ENCODE measurements at regions of chr1 and their contacts with region 1.

Region 1: GRCh38 chr1:31663622-31664452 is 19.2 kb upstream of the PEF1 start:
- DNase-seq: no peak
- H3K4me3 ChIP-seq: no peak overlapping the region
- H3K27ac ChIP-seq: no peak overlapping the region
- H3K4me1 ChIP-seq: peaks cover 13 to 36% (median 25%) of the 10 kb centered on the region in 3 donors
- H3K27me3 ChIP-seq: no peaks in the 10 kb centered on the region
- CTCF ChIP-seq: peak; percentile 91 to 96 (median 95)
- POLR2A ChIP-seq: no peak

Region 2: GRCh38 chr1:31297277-31298247 is 366.3 kb before region 1 on chr1:
- intact Hi-C with region 1: no loop called
- DNase-seq: no peak
- H3K4me3 ChIP-seq: peak overlapping the region; percentile 81 to 98 (median 93)
- H3K27ac ChIP-seq: peak overlapping the region; percentile 94 to 98 (median 96)
- H3K4me1 ChIP-seq: peaks cover 0 to 53% (median 23%) of the 10 kb centered on the region in 3 donors
- H3K27me3 ChIP-seq: no peaks in the 10 kb centered on the region
- CTCF ChIP-seq: no peak
- POLR2A ChIP-seq: no peak

Region 3: GRCh38 chr1:31605908-31606427 is 57.9 kb before region 1 on chr1:
- intact Hi-C with region 1: no loop called
- DNase-seq: no peak
- H3K4me3 ChIP-seq: no peak overlapping the region
- H3K27ac ChIP-seq: no peak overlapping the region
- H3K4me1 ChIP-seq: no peaks in the 10 kb centered on the region
- H3K27me3 ChIP-seq: no peaks in the 10 kb centered on the region
- CTCF ChIP-seq: no peak
- POLR2A ChIP-seq: no peak

Region 4: DNA sequence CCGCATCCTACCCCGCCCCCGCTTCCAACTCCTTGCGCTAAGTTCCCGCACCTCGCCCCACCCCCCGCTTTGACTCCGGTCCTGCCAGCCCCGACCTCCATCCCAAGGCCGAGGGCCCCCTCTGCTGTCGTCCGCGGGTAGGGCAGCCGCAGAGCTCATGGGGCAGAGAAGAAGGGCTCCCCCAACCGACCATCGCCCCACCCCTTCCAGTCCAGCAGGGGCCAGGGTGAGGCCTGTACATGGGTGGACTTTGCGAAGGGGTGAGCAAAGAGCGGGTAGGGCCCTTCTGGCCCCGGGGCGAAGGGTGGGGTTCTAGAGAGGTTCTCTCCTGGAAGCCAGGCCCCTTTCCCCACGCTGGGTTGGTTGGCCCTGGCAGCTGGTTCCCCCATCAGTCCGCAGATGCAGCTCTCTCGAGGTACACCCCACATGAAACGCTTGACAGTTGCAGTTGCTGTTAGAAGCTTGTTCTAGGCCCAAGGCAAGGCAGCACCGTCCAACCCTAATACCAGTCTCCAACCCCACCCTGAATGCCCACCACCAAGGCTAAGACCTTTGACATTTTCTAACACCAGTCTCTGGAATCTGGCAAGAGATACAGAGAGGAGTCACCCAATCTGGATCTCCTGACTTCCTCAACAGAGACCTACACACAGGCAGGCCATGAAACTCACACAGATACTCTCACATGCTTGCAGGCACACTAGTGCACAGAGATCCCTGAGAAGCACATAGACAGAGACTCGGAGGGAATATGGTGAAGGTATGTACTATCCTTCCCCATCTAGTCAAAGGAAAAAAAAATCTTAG is 125.6 kb after region 1 on chr1:
- intact Hi-C with region 1: loop called (anchors 5 kb)
- DNase-seq: peak; percentile 80
- H3K4me3 ChIP-seq: peak overlapping the region; percentile 41 to 80 (median 60)
- H3K27ac ChIP-seq: peak overlapping the region; percentile 71 to 90 (median 82)
- H3K4me1 ChIP-seq: peaks cover 8 to 20% (median 11%) of the 10 kb centered on the region in 3 donors
- H3K27me3 ChIP-seq: peaks cover 0 to 8% (median 0%) of the 10 kb centered on the region in 4 donors
- CTCF ChIP-seq: peak; percentile 90 to 94 (median 94)
- POLR2A ChIP-seq: no peak

Region 5: GRCh38 chr1:31959521-31960340 is 295.9 kb after region 1 on chr1:
- intact Hi-C with region 1: loop called (anchors 10 kb)
- DNase-seq: no peak
- H3K4me3 ChIP-seq: no peak overlapping the region
- H3K27ac ChIP-seq: no peak overlapping the region
- H3K4me1 ChIP-seq: peaks cover 16 to 52% (median 29%) of the 10 kb centered on the region in 3 donors
- H3K27me3 ChIP-seq: no peaks in the 10 kb centered on the region
- CTCF ChIP-seq: no peak
- POLR2A ChIP-seq: no peak